Right ventricle myocardium inferior (tissue), 1 donor: ENCODE measurements at regions of chr7 and their contacts with region 1.

Region 1: GRCh38 chr7:142782922-142783900 is 12.4 kb downstream of the PRSS2 start:
- DNase-seq: peak; percentile 84
- ATAC-seq: peak; percentile 84

Region 2: DNA sequence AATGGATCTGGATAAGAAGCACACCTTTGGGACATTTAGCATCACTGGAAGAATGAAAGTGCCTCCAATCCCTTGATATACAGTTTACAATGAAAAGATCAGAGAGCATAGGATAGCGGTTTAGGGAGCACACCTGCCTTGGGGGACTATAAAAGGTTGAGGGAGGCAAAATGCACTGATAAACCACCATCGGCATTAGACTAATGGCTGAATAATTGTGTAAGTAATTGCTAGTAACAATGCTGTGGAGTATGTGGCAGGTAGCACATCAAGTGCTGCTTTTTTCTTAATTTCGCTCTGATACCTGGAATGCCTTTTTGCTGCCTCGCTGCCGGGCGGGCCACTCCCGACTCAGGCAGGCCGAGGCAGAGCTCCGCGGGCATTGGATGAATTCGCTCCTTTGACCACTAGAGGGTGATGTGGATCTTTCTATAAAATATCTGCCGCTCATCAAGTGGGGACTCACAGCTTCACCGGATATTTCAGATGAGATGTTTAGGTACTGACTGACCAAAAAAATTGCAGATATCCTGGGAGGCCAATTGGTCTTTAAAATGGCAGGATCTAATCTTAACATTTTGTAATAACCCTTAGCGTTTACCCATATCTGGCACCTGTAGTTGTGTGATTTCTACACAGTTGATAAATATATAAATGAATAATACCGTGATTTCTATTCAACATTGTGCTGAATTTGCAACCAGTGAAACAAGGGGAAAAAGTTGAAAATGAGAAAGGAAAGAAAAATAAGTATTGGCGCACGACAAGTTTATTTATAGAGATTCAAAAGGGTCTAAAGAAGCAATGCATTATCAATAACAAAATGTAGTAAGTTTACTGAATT is 150.7 kb before region 1 on chr7:
- intact Hi-C with region 1: loop called (anchors 10 kb)
- DNase-seq: peak; percentile 56
- ATAC-seq: no peak

Region 3: GRCh38 chr7:142669074-142669654 is 114.0 kb before region 1 on chr7:
- intact Hi-C with region 1: loop called (anchors 1 kb)
- DNase-seq: no peak
- ATAC-seq: no peak

Region 4: GRCh38 chr7:142711746-142712619 is 71.2 kb before region 1 on chr7:
- intact Hi-C with region 1: loop called (anchors 1 kb)
- DNase-seq: no peak
- ATAC-seq: no peak

Region 5: GRCh38 chr7:142796608-142797385 is 13.6 kb after region 1 on chr7:
- intact Hi-C with region 1: no loop called
- DNase-seq: no peak
- ATAC-seq: no peak

Region 6: DNA sequence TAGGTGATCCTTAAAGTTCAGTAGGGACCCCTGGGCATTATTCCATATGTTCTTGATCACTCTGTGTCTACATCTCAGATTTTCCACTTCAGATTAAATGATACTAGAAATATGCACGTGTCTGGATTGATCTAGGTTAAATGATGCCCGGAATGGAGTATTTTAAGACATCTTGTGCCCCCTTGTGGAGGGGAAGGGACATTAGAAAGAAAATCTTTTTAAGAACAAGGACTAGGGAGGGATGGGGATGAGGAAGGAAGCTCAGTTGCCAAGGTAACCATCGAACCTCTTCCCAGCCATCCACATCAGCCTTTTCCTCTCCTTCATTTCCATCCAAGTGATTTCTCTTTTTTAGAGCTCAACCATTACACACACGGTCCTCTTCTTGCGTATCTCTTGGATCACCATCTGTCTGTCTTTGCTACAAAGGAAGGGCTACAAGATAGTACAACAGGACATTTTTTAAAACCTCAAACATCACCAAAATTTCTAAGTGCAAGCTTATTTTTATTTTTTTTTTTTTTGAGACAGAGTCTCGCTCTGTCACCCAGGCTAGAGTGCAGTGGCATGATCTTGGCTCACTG is 28.0 kb after region 1 on chr7:
- intact Hi-C with region 1: no loop called
- DNase-seq: no peak
- ATAC-seq: peak; percentile 33